ENCODE measurements at regions of chr18 and their contacts with region 1.

Region 1: GRCh38 chr18:49813319-49814146 is at the start of gene ACAA2:
- DNase-seq: peak; percentile 80
- H3K4me3 Mint-ChIP-seq: peak within 1 kb of the TSS; percentile 97
- H3K27ac Mint-ChIP-seq: peak within 1 kb of the TSS; percentile 98
- H3K4me1 Mint-ChIP-seq: peaks cover 61% of the 10 kb centered on the region
- H3K27me3 Mint-ChIP-seq: no peaks in the 10 kb centered on the region
- total RNA-seq, gene ACAA2: 74.3 and 74.6 TPM in 2 replicates

Region 2: GRCh38 chr18:48410095-48410920 is 1403.2 kb before region 1 on chr18:
- intact Hi-C with region 1: loop called (anchors 10 kb)
- DNase-seq: peak; percentile 75
- H3K4me3 Mint-ChIP-seq: peak overlapping the region; percentile 63
- H3K27ac Mint-ChIP-seq: no peak overlapping the region
- H3K4me1 Mint-ChIP-seq: peaks cover 7% of the 10 kb centered on the region
- H3K27me3 Mint-ChIP-seq: peaks cover 71% of the 10 kb centered on the region

Region 3: DNA sequence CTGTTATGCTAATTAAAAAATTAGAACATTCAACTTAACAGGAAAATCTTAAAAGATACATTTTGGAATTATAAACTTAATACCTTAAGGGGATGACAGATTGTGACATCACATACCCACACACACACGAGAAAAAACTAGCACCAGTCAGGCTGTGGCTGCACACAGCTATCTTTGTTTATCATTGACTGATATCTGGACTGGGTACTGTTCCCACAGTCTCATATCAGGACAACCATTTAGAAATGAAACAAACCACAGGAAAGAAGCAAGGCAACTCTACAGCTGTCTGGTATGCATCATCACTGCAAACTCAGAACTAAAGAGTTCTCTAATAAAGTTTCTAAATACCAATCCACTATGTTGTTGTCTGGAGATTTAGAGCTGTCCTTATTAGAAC is 651.9 kb before region 1 on chr18:
- intact Hi-C with region 1: loop called (anchors 1 kb)
- DNase-seq: peak; percentile 21
- H3K4me3 Mint-ChIP-seq: no peak overlapping the region
- H3K27ac Mint-ChIP-seq: peak overlapping the region; percentile 29
- H3K4me1 Mint-ChIP-seq: peaks cover 37% of the 10 kb centered on the region
- H3K27me3 Mint-ChIP-seq: no peaks in the 10 kb centered on the region

Region 4: DNA sequence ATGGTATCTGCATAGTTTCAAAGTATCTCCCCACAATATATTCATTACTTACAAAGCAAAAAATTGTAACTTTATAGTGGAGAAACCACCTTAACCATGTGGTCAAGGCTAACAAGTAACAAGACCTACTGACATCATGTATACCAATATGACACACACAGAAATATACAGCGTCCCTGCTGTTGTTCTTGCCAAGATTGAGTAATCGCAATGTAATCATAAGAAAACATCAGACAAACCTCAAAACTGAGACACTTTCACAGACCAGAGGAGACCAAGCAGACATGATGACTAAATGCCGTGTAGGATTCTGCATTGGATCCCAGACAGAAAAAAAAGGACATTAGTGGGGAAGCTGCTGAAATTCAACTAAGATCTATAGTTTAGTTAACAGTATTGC is 123.2 kb before region 1 on chr18:
- intact Hi-C with region 1: no loop called
- DNase-seq: no peak
- H3K4me3 Mint-ChIP-seq: no peak overlapping the region
- H3K27ac Mint-ChIP-seq: no peak overlapping the region
- H3K4me1 Mint-ChIP-seq: peaks cover 7% of the 10 kb centered on the region
- H3K27me3 Mint-ChIP-seq: peaks cover 3% of the 10 kb centered on the region

Region 5: DNA sequence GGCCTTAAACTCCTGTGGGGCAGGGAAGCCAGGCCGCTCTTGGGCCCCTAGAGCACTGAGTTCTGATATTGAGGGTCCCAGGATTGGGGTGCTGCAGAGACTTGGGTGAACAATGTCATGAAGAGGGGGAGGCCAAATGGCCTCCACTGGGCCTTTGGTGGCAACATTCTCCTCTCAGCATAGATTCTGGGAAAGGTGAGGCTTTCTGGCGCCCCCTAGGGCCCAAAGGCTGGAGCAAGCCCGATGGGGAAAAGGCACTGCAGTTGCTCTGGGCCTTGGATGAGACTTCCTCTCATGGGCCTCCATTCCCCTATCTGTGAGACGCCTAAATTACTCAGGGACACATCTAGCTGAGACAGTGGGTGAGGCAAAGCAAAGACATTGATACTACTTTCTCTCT is 85.0 kb before region 1 on chr18:
- intact Hi-C with region 1: loop called (anchors 5 kb)
- DNase-seq: peak; percentile 12
- H3K4me3 Mint-ChIP-seq: no peak overlapping the region
- H3K27ac Mint-ChIP-seq: no peak overlapping the region
- H3K4me1 Mint-ChIP-seq: peaks cover 6% of the 10 kb centered on the region
- H3K27me3 Mint-ChIP-seq: peaks cover 11% of the 10 kb centered on the region

Region 6: GRCh38 chr18:49858309-49859020 is 44.9 kb after region 1 on chr18:
- intact Hi-C with region 1: loop called (anchors 2 kb)
- DNase-seq: peak; percentile 38
- H3K4me3 Mint-ChIP-seq: no peak overlapping the region
- H3K27ac Mint-ChIP-seq: no peak overlapping the region
- H3K4me1 Mint-ChIP-seq: peaks cover 4% of the 10 kb centered on the region
- H3K27me3 Mint-ChIP-seq: no peaks in the 10 kb centered on the region

Region 7: GRCh38 chr18:50307738-50308470 is 494.4 kb after region 1 on chr18:
- intact Hi-C with region 1: loop called (anchors 5 kb)
- DNase-seq: peak; percentile 85
- H3K4me3 Mint-ChIP-seq: peak overlapping the region; percentile 90
- H3K27ac Mint-ChIP-seq: peak overlapping the region; percentile 57
- H3K4me1 Mint-ChIP-seq: peaks cover 18% of the 10 kb centered on the region
- H3K27me3 Mint-ChIP-seq: peaks cover 27% of the 10 kb centered on the region

Region 8: DNA sequence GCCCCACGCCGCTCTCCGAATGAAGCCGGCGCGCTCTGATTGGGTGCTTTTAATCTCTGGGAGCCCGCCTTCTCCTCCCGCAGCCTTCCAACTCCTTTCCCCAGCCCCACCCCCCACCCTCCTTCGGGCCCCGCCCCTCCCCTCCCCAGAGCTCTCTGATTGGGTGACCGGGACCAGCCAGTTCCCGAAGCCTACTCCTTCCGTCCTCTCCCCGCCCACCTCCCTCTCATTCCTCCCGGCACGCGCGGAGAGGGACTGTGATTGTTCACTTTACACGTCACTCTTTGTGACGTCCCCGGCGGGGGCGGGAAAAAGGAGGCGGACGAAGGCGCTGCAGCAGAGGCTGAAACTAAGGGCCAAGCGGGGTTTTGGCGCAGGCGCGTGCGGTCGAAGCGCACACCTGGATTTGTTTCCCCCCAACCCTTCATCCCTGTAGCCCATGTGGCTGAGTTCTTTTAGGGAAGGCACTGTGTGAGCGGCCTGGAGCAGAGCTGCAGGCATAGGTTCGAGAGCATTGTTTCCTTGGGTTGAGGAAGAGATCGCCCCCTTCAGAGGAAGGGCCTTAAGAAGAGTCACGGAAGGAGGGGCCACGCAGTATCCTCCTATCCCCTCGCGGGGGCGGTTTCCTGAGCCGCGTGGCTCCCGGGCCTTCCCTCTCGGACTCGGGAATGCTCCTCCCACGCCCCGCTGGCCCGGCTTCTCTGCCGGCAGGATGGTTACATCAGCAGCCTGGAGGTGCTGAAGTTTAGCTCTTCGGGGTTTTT is 1384.3 kb after region 1 on chr18 and contains the start of gene MEX3C:
- intact Hi-C with region 1: loop called (anchors 5 kb)
- DNase-seq: peak; percentile 99
- H3K4me3 Mint-ChIP-seq: peak within 1 kb of the TSS; percentile 96
- H3K27ac Mint-ChIP-seq: peak within 1 kb of the TSS; percentile 99
- H3K4me1 Mint-ChIP-seq: peaks cover 28% of the 10 kb centered on the region
- H3K27me3 Mint-ChIP-seq: no peaks in the 10 kb centered on the region
- total RNA-seq, gene MEX3C: 67.6 and 68.0 TPM in 2 replicates

Measured in activated T-helper 1 cell treated with anti-CD3 and anti-CD28 coated beads, Interleukin-12 subunit alpha, Interleukin-12 subunit beta, Interleukin-2, Interleukin-4 antibody, amounts not matched to agents 30 ng/mL and 10 ng/mL and 1 ng/mL, durations not matched to agents 14 hours and 24 hours and 36 hours (primary cell).